PC-3 (cell line): ENCODE measurements at regions of chr2 and their contacts with region 1.

Region 1: GRCh38 chr2:178478439-178479274 is at the start of gene FKBP7:
- DNase-seq: peak; percentile 83
- ATAC-seq: peak; percentile 59
- H3K4me3 ChIP-seq: peak within 1 kb of the TSS; percentile 98
- H3K27ac ChIP-seq: peak within 1 kb of the TSS; percentile 39
- H3K4me1 ChIP-seq: peaks cover 29% of the 10 kb centered on the region
- H3K27me3 ChIP-seq: no peaks in the 10 kb centered on the region
- CTCF ChIP-seq: peak; percentile 91
- total RNA-seq, gene FKBP7: 3.7 and 4.2 TPM in 2 replicates

Region 2: DNA sequence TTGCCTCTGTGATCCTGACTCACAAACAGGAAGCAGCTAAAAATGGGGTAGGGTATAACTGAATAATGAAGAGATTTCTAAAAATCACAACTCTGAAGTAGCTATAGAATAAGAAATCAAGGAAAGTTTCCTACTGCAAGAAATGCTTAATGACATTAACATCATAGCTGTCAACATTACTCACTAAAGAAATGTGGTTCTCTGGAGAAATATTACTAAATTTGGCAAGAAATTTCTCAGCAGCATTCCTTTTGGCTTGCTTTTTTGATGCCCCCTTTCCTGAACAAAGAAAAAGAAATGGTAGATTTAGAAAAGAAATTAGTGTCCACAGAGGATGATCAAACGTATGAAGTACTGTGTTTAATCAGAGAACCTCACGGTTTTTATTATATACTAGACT is 37.2 kb before region 1 on chr2:
- CTCF ChIA-PET with region 1: no interaction called
- POLR2A ChIA-PET with region 1: no interaction called
- intact Hi-C with region 1: loop called (anchors 2 kb)
- DNase-seq: no peak
- ATAC-seq: no peak
- H3K4me3 ChIP-seq: no peak overlapping the region
- H3K27ac ChIP-seq: no peak overlapping the region
- H3K4me1 ChIP-seq: peaks cover 24% of the 10 kb centered on the region
- H3K27me3 ChIP-seq: no peaks in the 10 kb centered on the region
- CTCF ChIP-seq: no peak

Region 3: GRCh38 chr2:178450774-178451525 is 27.7 kb before region 1 on chr2 and contains the starts of genes PJVK and PRKRA:
- CTCF ChIA-PET with region 1: no interaction called
- POLR2A ChIA-PET with region 1: no interaction called
- intact Hi-C with region 1: loop called (anchors 1 kb)
- DNase-seq: peak; percentile 97
- ATAC-seq: peak; percentile 94
- H3K4me3 ChIP-seq: peak within 1 kb of the TSS; percentile 93
- H3K27ac ChIP-seq: peak within 1 kb of the TSS; percentile 85
- H3K4me1 ChIP-seq: peaks cover 19% of the 10 kb centered on the region
- H3K27me3 ChIP-seq: no peaks in the 10 kb centered on the region
- CTCF ChIP-seq: no peak
- total RNA-seq, gene PJVK: 0.87 and 1.6 TPM in 2 replicates
- total RNA-seq, gene PRKRA: 78.2 and 87.6 TPM in 2 replicates

Region 4: GRCh38 chr2:178514664-178515063 is 36.0 kb after region 1 on chr2:
- CTCF ChIA-PET with region 1: interaction called, 9 read pairs
- POLR2A ChIA-PET with region 1: no interaction called
- intact Hi-C with region 1: loop called (anchors 2 kb)
- DNase-seq: peak; percentile 92
- ATAC-seq: peak; percentile 86
- H3K4me3 ChIP-seq: no peak overlapping the region
- H3K27ac ChIP-seq: peak overlapping the region; percentile 47
- H3K4me1 ChIP-seq: peaks cover 37% of the 10 kb centered on the region
- H3K27me3 ChIP-seq: no peaks in the 10 kb centered on the region
- CTCF ChIP-seq: no peak

Region 5: DNA sequence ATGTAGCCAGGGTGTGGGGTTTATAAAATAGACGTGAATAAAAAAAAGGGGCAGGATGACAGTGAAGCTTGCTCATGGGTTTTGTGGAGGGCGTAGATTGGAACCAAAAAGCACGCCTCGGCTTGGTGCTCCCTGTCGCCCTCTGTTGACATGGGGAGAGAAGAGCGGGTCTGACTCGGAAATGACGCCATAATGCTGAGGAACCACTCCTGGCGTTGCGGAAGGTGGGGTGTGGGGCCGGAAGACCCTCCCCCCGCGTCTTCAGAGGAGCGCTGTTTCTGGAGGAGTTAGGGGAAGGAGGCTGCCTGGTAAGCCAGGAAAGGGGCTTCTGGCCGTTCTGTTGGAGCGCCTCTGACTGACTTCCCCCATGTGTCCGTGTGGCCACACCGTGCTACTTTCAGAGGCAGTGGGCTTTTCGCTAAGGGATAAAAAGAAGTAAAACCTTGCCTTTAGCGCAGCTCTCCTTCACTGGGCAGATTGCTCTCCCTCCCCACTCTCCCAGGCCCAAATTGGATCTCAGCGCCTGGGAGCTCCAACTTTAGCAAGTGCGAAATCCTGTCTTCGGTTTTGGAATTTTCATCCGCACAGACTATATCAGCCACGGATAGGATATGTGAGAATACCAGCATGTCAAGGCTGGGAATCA is 44.4 kb after region 1 on chr2:
- CTCF ChIA-PET with region 1: no interaction called
- POLR2A ChIA-PET with region 1: no interaction called
- intact Hi-C with region 1: loop called (anchors 1 kb)
- DNase-seq: peak; percentile 64
- ATAC-seq: peak; percentile 85
- H3K4me3 ChIP-seq: peak overlapping the region; percentile 69
- H3K27ac ChIP-seq: no peak overlapping the region
- H3K4me1 ChIP-seq: no peaks in the 10 kb centered on the region
- H3K27me3 ChIP-seq: no peaks in the 10 kb centered on the region
- CTCF ChIP-seq: peak; percentile 72